HEK293 (cell line): ENCODE measurements at regions of chr1 and their contacts with region 1.

Region 1: GRCh38 chr1:161021165-161021960 is 411 bp upstream of the F11R start:
- H3K4me3 ChIP-seq: peak overlapping the region; percentile 59
- H3K27ac ChIP-seq: 0 out of 2 replicates have a peak overlapping the region, but pooled peaks have one; percentile 18
- H3K4me1 ChIP-seq: 0 out of 2 replicates have a peak, but pooled peaks cover 2% of the 10 kb centered on the region
- CTCF ChIP-seq: no peak

Region 2: GRCh38 chr1:160997323-160998038 is 23.9 kb before region 1 on chr1:
- CTCF ChIA-PET with region 1: interaction called, 18 read pairs
- POLR2A ChIA-PET with region 1: interaction called, 15 read pairs
- H3K4me3 ChIP-seq: no peak overlapping the region
- H3K27ac ChIP-seq: no peak overlapping the region
- H3K4me1 ChIP-seq: peaks cover 5% of the 10 kb centered on the region
- CTCF ChIP-seq: peak; percentile 54; the same call in 1 of the 2 replicates

Region 3: DNA sequence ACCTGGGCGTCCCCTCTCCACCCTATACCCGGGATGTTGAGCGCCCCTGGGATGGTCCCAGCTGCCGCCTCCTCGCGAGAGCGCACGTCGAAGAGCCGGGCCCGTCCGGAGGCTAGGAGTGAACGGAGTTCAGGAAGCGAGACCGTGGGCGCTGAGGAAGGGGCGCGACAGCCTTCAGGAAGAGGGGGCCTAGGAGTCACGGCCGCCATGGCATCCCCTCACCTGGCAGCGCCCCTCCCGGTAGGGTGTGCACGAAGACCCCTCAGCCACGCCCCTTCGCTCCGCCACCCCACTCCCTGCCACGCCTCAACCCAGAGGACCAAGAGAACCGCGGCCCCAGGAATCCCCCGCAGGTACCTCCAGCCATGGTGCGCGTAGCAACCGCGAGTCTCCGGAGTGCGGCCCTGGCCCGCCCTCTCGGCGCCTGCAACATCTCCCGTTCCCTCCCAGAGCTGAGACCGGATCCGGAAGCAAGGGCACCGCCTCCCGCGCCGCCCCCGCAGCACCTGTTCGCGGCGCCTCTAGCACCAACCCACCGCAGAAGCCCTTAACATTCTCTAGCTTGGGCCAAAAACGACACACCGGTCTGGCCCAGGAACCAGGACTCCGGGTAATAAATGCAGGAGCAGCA is 17.3 kb after region 1 on chr1 and contains the start of gene TSTD1:
- CTCF ChIA-PET with region 1: interaction called, 10 read pairs
- POLR2A ChIA-PET with region 1: interaction called, 26 read pairs
- H3K4me3 ChIP-seq: peak within 1 kb of the TSS; percentile 89
- H3K27ac ChIP-seq: peak within 1 kb of the TSS; percentile 70
- H3K4me1 ChIP-seq: peaks cover 10% of the 10 kb centered on the region
- CTCF ChIP-seq: peak; percentile 61; the same call in 1 of the 2 replicates